CD8-positive, alpha-beta T cell (primary cell): ENCODE measurements at regions of chr19 and their contacts with region 1.

Region 1: DNA sequence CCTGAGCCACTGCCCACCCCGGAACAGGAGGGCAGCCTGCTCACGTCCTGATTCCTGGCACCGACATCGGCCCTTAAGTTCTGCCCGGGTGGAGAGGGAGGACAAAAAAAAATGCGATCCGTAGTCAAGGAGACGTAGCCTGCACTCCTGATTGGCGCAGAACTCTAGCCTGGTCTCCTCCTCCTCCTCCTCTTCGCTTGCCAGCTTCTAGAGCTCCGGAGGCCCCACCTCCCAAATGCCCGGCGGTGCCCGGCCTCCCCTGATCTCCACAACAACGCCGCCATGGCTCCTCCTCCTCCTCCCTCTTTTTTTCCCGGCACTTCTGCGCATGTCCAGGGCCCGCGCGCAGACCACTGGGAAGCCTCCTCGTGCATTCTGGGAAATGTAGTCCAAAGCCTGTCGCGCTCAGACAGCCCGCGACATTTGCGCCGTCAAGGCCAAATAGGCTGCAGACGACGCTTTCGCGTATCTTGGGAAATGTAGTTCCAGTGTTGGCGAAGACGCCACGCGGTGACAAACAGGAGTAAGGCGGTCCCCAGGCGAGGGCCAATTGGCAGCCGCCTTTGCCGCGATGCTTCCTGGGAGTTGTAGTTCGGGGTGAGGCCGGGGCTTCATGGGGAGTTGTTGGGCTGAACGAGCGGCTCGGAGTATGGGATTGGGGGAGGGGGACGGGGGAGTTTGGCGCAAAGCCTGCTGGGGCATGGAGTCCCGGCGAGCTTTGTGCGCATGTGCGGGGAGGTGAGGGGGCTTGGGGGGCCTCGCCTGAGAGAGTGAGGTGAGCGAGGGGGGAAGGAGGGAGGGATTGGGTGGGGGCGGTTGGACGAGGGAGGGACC is at the start of gene ZNF444:
- DNase-seq: peak; percentile 98 to 100 (median 99)
- ATAC-seq: peak; percentile 84
- H3K4me3 ChIP-seq: peak within 1 kb of the TSS; percentile 69 to 74
- H3K4me3 Mint-ChIP-seq: peak within 1 kb of the TSS; percentile 92
- H3K27ac ChIP-seq: peak within 1 kb of the TSS; percentile 66 to 86
- H3K27ac Mint-ChIP-seq: peak within 1 kb of the TSS; percentile 93
- H3K4me1 ChIP-seq: peaks cover 20% of the 10 kb centered on the region
- H3K4me1 Mint-ChIP-seq: peaks cover 38% of the 10 kb centered on the region
- H3K27me3 ChIP-seq: no peaks in the 10 kb centered on the region
- H3K27me3 Mint-ChIP-seq: no peaks in the 10 kb centered on the region
- CTCF ChIP-seq: no peak
- total RNA-seq, gene ZNF444: 17.2 to 18.6 TPM

Region 2: DNA sequence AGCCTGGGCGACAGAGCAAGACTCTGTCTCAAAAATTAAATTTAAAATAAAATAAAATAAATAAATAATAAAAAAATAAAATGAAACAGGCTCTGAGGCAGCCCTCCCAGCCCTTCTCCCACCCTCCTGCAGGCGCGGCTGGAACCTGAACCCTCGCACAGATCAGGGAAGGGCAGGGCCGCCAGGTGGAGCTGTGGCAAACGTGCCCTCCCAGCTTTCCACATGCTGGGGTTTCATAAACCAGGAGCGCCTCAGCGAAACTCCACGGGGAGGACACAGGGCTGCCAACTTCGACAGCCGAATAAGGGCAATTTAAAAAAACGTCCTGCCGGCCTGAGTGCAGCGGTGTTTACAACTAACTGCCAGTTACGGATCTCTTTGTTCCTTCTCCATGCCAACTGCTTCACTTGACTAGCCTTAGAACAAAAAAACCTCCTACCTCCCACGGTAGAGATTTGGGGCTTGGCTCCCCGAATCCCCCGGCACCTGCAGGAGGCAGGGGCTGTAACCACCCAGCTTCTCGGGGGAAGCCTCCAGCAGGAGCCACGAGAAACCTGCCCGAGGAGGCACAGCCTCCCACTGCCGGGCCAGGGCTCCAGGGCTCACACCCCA is 35.6 kb before region 1 on chr19:
- CTCF ChIA-PET with region 1: interaction called, 3 read pairs
- POLR2A ChIA-PET with region 1: no interaction called
- intact Hi-C with region 1: loop called (anchors 1 to 5 kb)
- DNase-seq: peak; percentile 13 to 70 (median 56)
- ATAC-seq: peak; percentile 77
- H3K4me3 ChIP-seq: no peak overlapping the region
- H3K4me3 Mint-ChIP-seq: peak overlapping the region; percentile 37
- H3K27ac ChIP-seq: no peak overlapping the region
- H3K27ac Mint-ChIP-seq: peak overlapping the region; percentile 57
- H3K4me1 ChIP-seq: peaks cover 11% of the 10 kb centered on the region
- H3K4me1 Mint-ChIP-seq: peaks cover 38% of the 10 kb centered on the region
- H3K27me3 ChIP-seq: no peaks in the 10 kb centered on the region
- H3K27me3 Mint-ChIP-seq: no peaks in the 10 kb centered on the region
- CTCF ChIP-seq: peak; percentile 68

Region 3: GRCh38 chr19:56121180-56122167 is 19.3 kb before region 1 on chr19 and contains the start of gene ZNF787:
- CTCF ChIA-PET with region 1: interaction called, 3 read pairs
- POLR2A ChIA-PET with region 1: interaction called, 23 read pairs
- intact Hi-C with region 1: loop called (anchors 1 kb)
- DNase-seq: peak; percentile 94 to 99 (median 97)
- ATAC-seq: peak; percentile 82
- H3K4me3 ChIP-seq: peak within 1 kb of the TSS; percentile 56 to 67
- H3K4me3 Mint-ChIP-seq: peak within 1 kb of the TSS; percentile 88
- H3K27ac ChIP-seq: peak within 1 kb of the TSS; percentile 81 to 97
- H3K27ac Mint-ChIP-seq: peak within 1 kb of the TSS; percentile 94
- H3K4me1 ChIP-seq: peaks cover 24% of the 10 kb centered on the region
- H3K4me1 Mint-ChIP-seq: peaks cover 43% of the 10 kb centered on the region
- H3K27me3 ChIP-seq: no peaks in the 10 kb centered on the region
- H3K27me3 Mint-ChIP-seq: no peaks in the 10 kb centered on the region
- CTCF ChIP-seq: no peak
- total RNA-seq, gene ZNF787: 10.2 to 10.8 TPM

Region 4: DNA sequence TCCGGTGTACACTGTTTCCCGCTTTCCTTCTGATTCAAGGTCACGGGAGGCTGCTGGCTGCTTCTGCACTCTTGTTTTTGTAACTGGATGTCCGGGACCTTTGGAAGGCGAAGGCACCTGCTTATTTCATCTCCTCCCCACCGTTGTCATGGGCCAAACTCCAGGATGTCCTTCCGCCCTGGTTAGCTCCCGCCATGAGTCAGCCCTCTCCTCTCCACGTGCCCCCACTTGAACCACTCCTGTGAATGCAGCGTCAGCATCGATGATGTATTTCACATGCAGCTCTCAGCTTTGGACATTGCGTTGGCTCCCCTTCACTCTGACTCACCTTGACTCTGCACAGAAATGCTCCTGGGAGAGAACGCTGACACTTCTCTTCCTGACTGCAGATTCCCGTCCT is 29.5 kb after region 1 on chr19:
- CTCF ChIA-PET with region 1: interaction called, 4 read pairs
- POLR2A ChIA-PET with region 1: no interaction called
- intact Hi-C with region 1: loop called in 1 of 2 experiments (anchors 2 kb)
- DNase-seq: no peak
- ATAC-seq: no peak
- H3K4me3 ChIP-seq: no peak overlapping the region
- H3K4me3 Mint-ChIP-seq: no peak overlapping the region
- H3K27ac ChIP-seq: no peak overlapping the region
- H3K27ac Mint-ChIP-seq: no peak overlapping the region
- H3K4me1 ChIP-seq: no peaks in the 10 kb centered on the region
- H3K4me1 Mint-ChIP-seq: peaks cover 2% of the 10 kb centered on the region
- H3K27me3 ChIP-seq: no peaks in the 10 kb centered on the region
- H3K27me3 Mint-ChIP-seq: peaks cover 8% of the 10 kb centered on the region
- CTCF ChIP-seq: no peak

Region 5: DNA sequence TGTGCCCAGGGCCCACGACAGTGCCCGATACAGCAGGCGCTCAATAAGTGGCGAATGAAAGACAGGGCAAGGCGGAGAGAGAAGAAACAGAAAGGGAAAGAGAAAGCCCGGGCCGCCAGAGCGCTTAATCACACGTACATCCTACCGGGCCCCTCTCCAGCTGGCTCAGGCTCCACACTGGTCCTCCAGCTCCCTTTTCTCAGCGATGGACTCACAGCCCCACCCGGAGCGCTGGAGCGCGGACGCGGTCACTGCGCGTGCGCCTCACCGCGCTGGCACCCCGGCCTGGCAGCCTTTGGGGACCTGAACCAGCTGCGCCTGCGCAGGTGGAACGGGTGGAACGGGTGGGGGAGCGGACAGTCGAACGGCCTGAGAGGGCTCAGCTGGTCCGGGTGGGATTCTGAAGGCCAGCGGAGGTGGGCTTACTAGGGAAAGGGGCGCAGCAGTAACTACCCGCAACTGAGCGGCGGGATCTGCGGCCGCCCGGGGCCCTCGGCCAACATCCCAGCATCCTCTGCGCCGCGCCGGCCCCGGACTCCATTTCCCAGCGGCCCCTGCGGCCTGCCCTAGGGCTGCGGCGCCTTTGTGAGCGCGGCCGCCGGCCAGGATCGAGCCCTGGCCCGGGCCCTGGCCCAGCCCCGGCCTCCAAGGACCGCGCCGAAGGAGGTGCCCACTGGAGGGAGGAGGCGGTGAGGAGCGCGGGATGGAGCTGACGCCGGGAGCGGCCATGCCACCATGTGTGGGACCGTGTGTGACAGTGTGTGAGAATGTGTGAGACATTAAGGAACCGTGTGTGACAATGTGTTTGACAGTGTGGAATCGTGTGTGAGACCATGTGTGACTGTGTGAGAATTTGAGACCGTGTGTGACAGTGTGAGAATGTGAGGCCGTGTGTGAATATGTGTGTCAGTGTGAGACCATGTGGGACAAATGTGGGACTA is 263.2 kb after region 1 on chr19 and contains the start of gene ZNF583:
- CTCF ChIA-PET with region 1: no interaction called
- POLR2A ChIA-PET with region 1: no interaction called
- intact Hi-C with region 1: loop called in 1 of 2 experiments (anchors 1 kb)
- DNase-seq: peak; percentile 83 to 95 (median 91)
- ATAC-seq: peak; percentile 82
- H3K4me3 ChIP-seq: peak within 1 kb of the TSS; percentile 80 to 93
- H3K4me3 Mint-ChIP-seq: peak within 1 kb of the TSS; percentile 85
- H3K27ac ChIP-seq: peak within 1 kb of the TSS; percentile 83 to 99
- H3K27ac Mint-ChIP-seq: peak within 1 kb of the TSS; percentile 88
- H3K4me1 ChIP-seq: peaks cover 18% of the 10 kb centered on the region
- H3K4me1 Mint-ChIP-seq: peaks cover 32% of the 10 kb centered on the region
- H3K27me3 ChIP-seq: no peaks in the 10 kb centered on the region
- H3K27me3 Mint-ChIP-seq: no peaks in the 10 kb centered on the region
- CTCF ChIP-seq: no peak
- total RNA-seq, gene ZNF583: 1.3 to 2.4 TPM

Region 6: GRCh38 chr19:56477429-56478338 is 336.9 kb after region 1 on chr19:
- CTCF ChIA-PET with region 1: no interaction called
- POLR2A ChIA-PET with region 1: no interaction called
- intact Hi-C with region 1: loop called in 1 of 2 experiments (anchors 5 kb)
- DNase-seq: peak; percentile 21 to 84 (median 63)
- ATAC-seq: peak; percentile 66
- H3K4me3 ChIP-seq: peak overlapping the region; percentile 23 to 67
- H3K4me3 Mint-ChIP-seq: peak overlapping the region; percentile 96
- H3K27ac ChIP-seq: peak overlapping the region; percentile 56 to 84
- H3K27ac Mint-ChIP-seq: peak overlapping the region; percentile 95
- H3K4me1 ChIP-seq: no peaks in the 10 kb centered on the region
- H3K4me1 Mint-ChIP-seq: peaks cover 18% of the 10 kb centered on the region
- H3K27me3 ChIP-seq: no peaks in the 10 kb centered on the region
- H3K27me3 Mint-ChIP-seq: peaks cover 19% of the 10 kb centered on the region
- CTCF ChIP-seq: no peak